ENCODE measurements at regions of chr3 and their contacts with region 1.

Region 1: DNA sequence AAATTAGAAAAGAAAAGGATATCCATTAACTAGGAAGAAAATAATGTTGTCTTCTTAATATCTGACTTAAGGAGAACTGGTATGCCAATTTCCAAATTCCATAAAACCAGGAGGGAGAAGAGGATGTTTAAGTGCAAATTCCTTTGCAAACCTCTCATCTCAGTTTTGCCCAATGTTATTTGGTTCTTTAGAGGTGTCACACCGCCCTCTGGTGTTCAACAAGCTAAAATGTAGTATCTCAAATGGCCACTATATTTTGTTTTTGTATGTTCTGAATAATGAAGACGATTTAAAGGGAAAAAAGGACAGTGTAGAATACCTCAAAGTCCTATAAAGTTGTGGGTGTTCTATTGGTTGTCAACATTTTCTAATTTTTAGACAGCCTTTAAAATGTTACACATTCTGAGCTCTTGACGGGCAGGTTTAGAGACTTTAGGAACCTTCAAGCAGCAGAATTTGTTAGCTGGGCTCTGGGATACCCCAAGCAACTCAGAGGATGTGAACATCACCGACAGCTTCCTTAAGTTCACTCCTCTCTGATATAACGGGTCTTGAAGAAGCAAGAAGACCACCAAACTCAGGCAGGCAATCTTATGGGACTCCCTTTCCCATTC is 458.3 kb downstream of the MFSD1 start:
- DNase-seq: peak; percentile 69
- H3K4me3 ChIP-seq: no peak overlapping the region
- CTCF ChIP-seq: peak; percentile 54

Region 2: GRCh38 chr3:158539414-158540014 is 720.6 kb before region 1 on chr3:
- CTCF ChIA-PET with region 1: interaction called, 12 read pairs
- POLR2A ChIA-PET with region 1: no interaction called
- DNase-seq: no peak
- H3K4me3 ChIP-seq: no peak overlapping the region
- CTCF ChIP-seq: peak; percentile 52

Region 3: DNA sequence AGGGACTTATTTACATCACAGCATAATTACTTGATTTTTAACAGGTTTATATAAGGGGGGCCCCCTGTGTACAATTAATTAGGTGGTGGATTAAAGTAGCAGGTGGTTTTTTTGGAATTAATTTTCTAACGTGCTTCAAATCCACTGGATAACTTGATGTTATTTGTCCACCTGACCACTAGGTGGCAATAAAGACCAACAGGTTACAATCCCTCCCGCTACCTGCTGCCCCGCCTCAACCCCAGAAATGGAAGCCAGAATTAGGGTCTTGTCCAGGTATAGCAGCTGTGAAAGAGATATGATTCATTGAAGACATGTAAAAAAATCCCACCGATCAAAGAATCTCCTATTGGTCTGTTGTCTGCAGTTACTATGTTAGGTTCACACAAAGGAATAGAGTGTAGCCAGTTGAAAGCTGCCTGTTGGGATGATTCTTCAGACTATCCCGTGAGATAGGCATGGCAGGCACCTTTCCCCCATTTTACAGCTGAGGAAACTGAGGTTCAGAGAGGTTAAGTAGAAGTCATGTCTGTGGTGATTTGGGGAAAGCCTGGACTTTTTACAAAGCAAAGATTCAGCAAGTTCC is 414.3 kb before region 1 on chr3:
- CTCF ChIA-PET with region 1: interaction called, 376 read pairs
- POLR2A ChIA-PET with region 1: no interaction called
- DNase-seq: no peak
- H3K4me3 ChIP-seq: no peak overlapping the region
- CTCF ChIP-seq: peak; percentile 45

Region 4: DNA sequence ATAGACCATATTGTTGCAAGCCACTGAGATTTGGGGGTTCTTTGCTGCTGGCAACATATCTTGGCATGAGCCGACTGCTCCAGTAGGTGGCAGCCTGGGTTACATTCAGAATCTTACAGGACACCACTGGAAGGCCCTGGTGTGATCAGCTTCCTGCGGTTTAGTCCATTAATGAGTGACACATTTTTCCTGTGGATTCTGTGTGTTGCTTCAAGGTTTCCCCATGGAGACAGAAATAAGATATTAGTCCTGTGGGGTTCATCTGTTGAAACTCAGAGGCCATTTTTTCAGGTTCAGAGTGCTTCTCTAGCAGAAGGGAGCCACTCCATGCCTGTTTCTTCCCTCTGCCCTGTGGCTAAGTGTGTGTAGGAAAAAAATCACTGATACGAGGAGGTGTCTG is 342.1 kb before region 1 on chr3:
- CTCF ChIA-PET with region 1: interaction called, 67 read pairs
- POLR2A ChIA-PET with region 1: no interaction called
- DNase-seq: peak; percentile 29
- H3K4me3 ChIP-seq: no peak overlapping the region
- CTCF ChIP-seq: peak; percentile 75

Region 5: GRCh38 chr3:159432682-159433340 is 172.7 kb after region 1 on chr3:
- CTCF ChIA-PET with region 1: no interaction called
- POLR2A ChIA-PET with region 1: no interaction called
- DNase-seq: no peak
- H3K4me3 ChIP-seq: no peak overlapping the region
- CTCF ChIP-seq: no peak

Region 6: DNA sequence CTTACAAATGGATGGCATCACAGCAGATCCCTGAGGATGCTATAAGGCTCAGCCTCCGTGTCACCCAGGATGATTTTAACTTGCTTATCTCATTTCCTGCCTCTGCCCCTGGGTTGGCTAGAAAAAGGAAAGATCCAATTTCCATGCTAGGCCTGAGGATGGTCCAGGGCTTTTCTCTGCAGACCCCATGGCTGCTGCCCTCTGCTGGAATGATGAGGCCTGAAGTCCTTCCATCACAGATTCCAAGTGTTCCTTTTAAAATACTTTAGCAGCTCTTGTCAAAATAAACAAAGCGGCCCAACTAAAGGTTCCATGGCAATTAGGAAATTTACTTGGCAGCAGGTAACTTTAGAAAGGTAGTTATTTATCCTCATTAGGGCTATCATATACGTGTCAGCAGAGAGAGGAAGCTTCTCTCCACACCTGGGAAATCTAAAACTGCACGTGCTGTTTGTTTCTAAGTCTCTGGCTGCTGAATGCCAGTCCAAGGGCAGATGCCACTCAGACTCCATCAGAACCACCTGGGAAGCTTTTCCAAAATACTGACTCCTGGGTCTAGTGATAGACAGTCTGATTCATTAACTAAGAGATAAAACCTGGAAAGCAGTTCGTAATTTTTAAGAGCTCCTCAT is 326.5 kb after region 1 on chr3:
- CTCF ChIA-PET with region 1: interaction called, 43 read pairs
- POLR2A ChIA-PET with region 1: no interaction called
- DNase-seq: no peak
- H3K4me3 ChIP-seq: no peak overlapping the region
- CTCF ChIP-seq: peak; percentile 70

Measured in AG04449 (cell line).